ENCODE measurements at regions of chr19 and their contacts with region 1.

Region 1: DNA sequence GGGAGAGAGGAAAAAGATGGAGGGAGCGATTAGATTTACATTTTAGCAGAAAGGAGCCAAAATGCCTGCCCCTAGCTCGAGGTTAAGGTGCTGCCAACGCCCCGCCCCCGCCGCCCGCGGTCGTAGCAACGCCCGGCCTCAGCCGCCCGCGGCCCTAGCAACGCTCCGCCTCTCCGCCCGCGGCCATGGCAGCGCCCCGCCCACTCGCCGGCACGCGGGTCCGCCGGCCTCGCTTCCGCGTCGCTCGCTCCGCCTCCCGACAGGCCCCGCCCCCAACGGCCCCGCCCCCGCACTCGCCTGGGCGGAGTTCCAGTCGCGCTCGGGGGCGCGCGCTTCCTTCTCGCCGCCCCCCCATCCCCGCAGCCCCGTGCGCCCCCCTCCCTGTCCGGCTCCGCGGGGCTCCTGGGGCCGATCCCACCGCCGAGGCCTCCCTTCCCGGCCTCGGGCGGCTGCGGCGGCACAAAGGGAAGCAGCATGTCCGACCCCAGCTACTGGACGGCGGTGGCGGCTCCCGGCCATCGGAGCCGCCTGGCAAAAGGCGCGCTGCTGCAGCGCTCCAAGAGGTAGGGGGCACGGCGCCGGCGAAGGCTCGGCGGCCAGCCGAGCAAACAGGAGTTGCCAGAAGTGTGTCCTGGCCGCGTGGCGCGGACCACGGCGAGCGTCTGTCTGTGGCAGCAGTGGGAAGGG is 20.3 kb downstream of the MAST3 start:
- DNase-seq: peak; percentile 92 to 96
- ATAC-seq: peak; percentile 94 to 98 (median 97)
- H3K4me3 ChIP-seq: peak overlapping the region; percentile 73
- H3K27ac ChIP-seq: peak overlapping the region; percentile 53
- H3K4me1 ChIP-seq: no peaks in the 10 kb centered on the region
- H3K27me3 ChIP-seq: no peaks in the 10 kb centered on the region
- CTCF ChIP-seq: no peak

Region 2: GRCh38 chr19:17747205-17748098 is 370.4 kb before region 1 on chr19:
- intact Hi-C with region 1: no loop called
- DNase-seq: peak; percentile 91 to 96
- ATAC-seq: peak; percentile 99 to 100 (median 100)
- H3K4me3 ChIP-seq: peak overlapping the region; percentile 59
- H3K27ac ChIP-seq: no peak overlapping the region
- H3K4me1 ChIP-seq: peaks cover 4% of the 10 kb centered on the region
- H3K27me3 ChIP-seq: peaks cover 0 to 6% (median 4%) of the 10 kb centered on the region in 3 donors
- CTCF ChIP-seq: no peak

Region 3: GRCh38 chr19:18152444-18152816 is 34.6 kb after region 1 on chr19:
- intact Hi-C with region 1: loop called (anchors 5 kb)
- DNase-seq: peak; percentile 95 to 97
- ATAC-seq: peak; percentile 48 to 76 (median 67)
- H3K4me3 ChIP-seq: peak overlapping the region; percentile 76
- H3K27ac ChIP-seq: peak overlapping the region; percentile 92
- H3K4me1 ChIP-seq: peaks cover 41% of the 10 kb centered on the region
- H3K27me3 ChIP-seq: no peaks in the 10 kb centered on the region
- CTCF ChIP-seq: peak; percentile 53

Region 4: DNA sequence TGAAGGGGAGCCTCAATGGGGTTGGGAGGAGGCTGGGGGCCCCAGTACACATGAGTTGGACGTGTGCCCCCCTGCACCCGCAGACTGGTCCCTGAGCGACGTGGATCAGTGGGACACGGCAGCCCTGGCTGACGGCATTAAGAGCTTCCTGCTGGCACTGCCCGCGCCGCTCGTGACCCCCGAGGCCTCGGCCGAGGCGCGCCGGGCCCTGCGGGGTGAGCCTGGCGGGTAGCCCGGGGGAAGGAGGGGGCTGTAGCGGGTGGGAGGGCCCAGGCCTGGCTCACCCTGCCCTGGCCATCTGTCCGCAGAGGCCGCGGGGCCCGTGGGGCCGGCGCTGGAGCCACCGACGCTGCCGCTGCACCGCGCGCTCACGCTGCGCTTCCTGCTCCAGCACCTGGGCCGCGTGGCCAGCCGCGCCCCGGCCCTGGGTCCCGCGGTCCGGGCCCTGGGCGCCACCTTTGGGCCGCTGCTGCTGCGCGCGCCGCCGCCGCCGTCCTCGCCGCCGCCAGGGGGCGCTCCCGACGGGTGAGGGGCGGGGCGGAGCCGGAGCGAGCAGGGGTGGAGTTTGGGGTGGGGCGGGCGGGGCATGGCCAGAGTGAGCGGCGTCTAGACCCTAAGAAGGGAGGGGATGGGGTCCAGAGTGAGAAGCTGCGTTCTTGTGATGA is 43.3 kb after region 1 on chr19:
- intact Hi-C with region 1: loop called in 1 of 2 experiments (anchors 2 kb)
- DNase-seq: peak; percentile 79 to 88
- ATAC-seq: peak; percentile 73 to 83 (median 81)
- H3K4me3 ChIP-seq: peak overlapping the region; percentile 53
- H3K27ac ChIP-seq: peak overlapping the region; percentile 70
- H3K4me1 ChIP-seq: peaks cover 34% of the 10 kb centered on the region
- H3K27me3 ChIP-seq: no peaks in the 10 kb centered on the region
- CTCF ChIP-seq: peak; percentile 87

Region 5: GRCh38 chr19:18251587-18252369 is 133.9 kb after region 1 on chr19:
- intact Hi-C with region 1: loop called (anchors 2 to 5 kb)
- DNase-seq: peak; percentile 74 to 81
- ATAC-seq: peak; percentile 79 to 92 (median 88)
- H3K4me3 ChIP-seq: no peak overlapping the region
- H3K27ac ChIP-seq: no peak overlapping the region
- H3K4me1 ChIP-seq: no peaks in the 10 kb centered on the region
- H3K27me3 ChIP-seq: no peaks in the 10 kb centered on the region
- CTCF ChIP-seq: peak; percentile 97